ENCODE measurements at regions of chr1 and their contacts with region 1.

Region 1: DNA sequence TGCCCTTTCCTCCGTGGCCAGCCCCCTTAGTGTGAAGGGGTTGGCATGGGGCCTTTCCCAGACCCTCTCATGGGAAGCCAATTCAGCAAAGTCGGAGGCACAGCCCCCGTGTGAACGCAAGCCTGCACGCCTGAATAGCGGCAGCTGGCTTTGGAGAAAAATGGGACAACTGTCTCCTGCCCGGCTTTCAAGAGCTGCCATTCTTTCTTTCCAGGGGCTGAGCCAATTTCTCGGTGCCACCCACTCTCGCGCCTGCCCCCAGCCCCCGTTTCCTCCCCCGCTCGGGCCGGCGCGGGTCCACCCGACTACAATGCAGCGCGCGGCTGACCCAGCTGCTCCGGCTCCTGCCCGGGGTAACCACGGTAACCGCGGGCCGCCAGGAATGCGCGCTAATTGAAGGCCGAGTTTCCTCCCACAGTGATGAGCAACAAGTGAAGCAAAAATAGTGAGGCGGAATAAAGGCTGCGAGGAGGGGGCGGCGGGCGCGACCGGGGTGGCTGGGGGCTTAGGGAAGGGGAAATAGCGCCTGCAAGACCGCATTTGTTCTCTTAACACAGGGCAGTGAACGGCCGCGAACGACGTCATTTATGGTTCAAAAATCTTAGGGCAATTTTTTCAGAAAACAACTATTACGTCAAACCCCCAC is 27.8 kb downstream of the ILDR2 start:
- DNase-seq: peak; percentile 57 to 92 (median 88)
- H3K4me3 ChIP-seq: peak overlapping the region; percentile 12 to 66 (median 50)
- H3K27ac ChIP-seq: peak overlapping the region; percentile 66 to 98 (median 93)
- H3K27me3 ChIP-seq: no peaks in the 10 kb centered on the region
- CTCF ChIP-seq: peak in 15 of 56 donors; percentile 6 to 47 (median 25)

Region 2: DNA sequence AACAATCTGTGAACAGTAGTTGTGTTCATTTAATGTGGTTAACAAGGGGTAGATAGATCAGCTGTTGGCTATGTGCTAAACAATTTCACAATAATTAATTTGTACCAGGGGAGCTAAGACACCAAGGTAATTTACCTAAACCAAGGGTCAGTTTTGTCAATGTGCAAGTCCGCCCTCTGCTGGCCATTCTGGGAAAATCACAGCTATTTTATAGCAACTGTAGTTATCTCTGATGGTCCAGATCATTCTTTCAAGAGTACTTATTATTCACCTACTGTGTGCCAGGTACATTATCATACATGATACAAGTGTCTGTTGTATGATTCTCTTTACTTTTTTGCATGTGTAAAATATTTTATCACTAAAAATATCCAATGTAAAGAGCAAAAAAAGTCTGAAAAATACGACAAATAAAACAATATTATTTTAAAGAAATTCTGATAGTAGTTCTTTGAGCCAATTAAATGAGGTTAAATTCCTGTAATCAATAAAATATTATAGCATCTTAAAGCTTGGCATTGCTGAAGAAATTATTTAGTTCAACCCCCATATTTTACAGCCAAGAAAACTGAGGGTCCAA is 468.4 kb before region 1 on chr1:
- intact Hi-C with region 1: no loop called
- DNase-seq: peak in 8 of 10 donors; percentile 23 to 77 (median 50)
- H3K4me3 ChIP-seq: no peak overlapping the region
- H3K27ac ChIP-seq: no peak overlapping the region
- H3K27me3 ChIP-seq: peaks cover 0 to 4% (median 0%) of the 10 kb centered on the region in 45 donors
- CTCF ChIP-seq: peak; percentile 65 to 93 (median 84)

Region 3: GRCh38 chr1:166910396-166910994 is 37.0 kb before region 1 on chr1:
- intact Hi-C with region 1: loop called in 1 of 2 experiments (anchors 2 kb)
- DNase-seq: peak in 9 of 10 donors; percentile 31 to 81 (median 65)
- H3K4me3 ChIP-seq: no peak overlapping the region
- H3K27ac ChIP-seq: no peak overlapping the region
- H3K27me3 ChIP-seq: no peaks in the 10 kb centered on the region
- CTCF ChIP-seq: peak; percentile 37 to 97 (median 82)

Measured in dorsolateral prefrontal cortex (tissue), 120 donors.